Dorsolateral prefrontal cortex (tissue), 120 donors: ENCODE measurements at regions of chr2 and their contacts with region 1.

Region 1: DNA sequence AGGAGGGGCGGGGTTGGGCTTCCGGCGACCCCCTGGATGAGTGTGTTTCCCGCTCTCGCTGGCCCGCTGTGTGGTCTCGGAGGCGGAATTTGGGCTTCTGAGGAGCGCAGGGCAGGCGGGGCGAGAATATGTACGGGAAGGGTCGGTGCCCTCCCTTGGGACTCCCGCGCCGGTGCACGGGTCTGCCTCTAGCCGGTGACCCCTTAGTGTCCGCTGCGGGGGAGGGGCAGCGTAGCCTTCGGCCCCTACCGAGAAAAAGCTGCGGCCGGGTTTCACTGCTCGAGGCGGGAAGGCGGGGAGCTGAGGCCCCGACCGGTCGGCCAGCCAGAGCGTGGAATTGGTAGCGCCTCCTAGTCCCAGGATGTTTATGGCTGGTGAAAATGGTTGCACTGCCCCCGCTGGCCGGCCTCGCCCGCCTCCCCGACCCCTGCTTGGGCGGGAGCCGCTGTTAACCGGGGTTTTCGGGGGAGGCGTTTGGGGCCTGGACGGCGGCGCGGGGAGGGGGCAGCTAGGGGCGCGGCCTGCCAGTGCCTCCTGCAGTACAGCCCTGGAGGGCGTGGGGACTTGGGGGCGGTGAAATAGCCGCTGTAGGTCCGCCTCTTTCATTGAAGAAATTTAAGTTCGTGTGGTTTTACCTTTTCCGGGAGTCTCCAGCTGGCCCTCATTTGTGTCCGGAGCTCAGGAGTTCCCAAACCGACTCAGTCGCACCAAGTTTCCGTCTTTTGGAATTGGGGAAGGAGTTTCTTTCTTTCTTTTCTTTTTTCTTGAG is at the start of gene UGP2:
- DNase-seq: peak; percentile 54 to 85 (median 71)
- H3K4me3 ChIP-seq: peak within 1 kb of the TSS; percentile 73 to 99 (median 93)
- H3K27ac ChIP-seq: peak within 1 kb of the TSS; percentile 85 to 99 (median 97)
- H3K27me3 ChIP-seq: no peaks in the 10 kb centered on the region
- CTCF ChIP-seq: peak in 48 of 56 donors; percentile 2 to 66 (median 41)
- total RNA-seq, gene UGP2: 84.4 to 293 (median 212) TPM

Region 2: DNA sequence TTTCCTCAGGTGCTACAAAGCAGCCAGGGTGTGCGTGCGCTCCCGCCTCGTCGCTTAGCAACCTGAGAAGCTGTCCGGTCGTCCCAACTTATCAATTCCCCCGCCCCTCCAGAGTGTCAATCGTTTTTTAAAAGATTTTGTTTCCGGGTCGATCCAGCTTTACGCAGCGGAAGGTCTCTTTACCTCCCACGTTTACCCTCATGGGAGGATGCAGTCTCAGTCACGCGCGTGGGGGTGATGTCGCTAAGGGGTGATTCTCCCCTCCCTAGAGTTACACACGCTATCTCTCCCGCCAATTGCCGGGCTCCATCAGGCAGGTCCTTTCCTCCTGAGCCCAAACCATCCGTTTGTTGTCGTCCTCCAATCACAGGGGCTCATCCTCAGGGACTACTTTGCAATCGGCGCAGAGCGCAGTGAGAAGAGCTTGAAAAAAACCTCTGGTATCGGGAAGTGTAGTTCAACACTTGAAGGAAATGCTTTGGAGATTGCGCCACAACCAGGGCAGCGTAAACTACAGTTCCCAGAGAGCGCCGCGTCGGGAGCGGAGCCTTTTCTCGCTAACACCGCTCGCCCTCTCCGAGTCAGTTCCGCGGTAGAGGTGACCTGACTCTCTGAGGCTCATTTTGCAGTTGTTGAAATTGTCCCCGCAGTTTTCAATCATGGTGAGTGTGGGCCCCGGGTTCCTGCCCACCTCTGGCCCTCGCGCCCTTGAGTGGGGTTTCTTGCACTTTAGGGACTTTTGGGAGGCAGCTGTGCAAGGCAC is 252.9 kb before region 1 on chr2 and contains the starts of genes MDH1 and WDPCP:
- intact Hi-C with region 1: loop called (anchors 5 to 10 kb)
- DNase-seq: peak; percentile 85 to 98 (median 94)
- H3K4me3 ChIP-seq: peak within 1 kb of the TSS; percentile 63 to 99 (median 92)
- H3K27ac ChIP-seq: peak within 1 kb of the TSS; percentile 72 to 97 (median 92)
- H3K27me3 ChIP-seq: no peaks in the 10 kb centered on the region
- CTCF ChIP-seq: peak in 29 of 56 donors; percentile 1 to 58 (median 18)
- total RNA-seq, gene MDH1: 170 to 794 (median 563) TPM
- total RNA-seq, gene WDPCP: 22.1 to 56.7 (median 36.8) TPM

Region 3: DNA sequence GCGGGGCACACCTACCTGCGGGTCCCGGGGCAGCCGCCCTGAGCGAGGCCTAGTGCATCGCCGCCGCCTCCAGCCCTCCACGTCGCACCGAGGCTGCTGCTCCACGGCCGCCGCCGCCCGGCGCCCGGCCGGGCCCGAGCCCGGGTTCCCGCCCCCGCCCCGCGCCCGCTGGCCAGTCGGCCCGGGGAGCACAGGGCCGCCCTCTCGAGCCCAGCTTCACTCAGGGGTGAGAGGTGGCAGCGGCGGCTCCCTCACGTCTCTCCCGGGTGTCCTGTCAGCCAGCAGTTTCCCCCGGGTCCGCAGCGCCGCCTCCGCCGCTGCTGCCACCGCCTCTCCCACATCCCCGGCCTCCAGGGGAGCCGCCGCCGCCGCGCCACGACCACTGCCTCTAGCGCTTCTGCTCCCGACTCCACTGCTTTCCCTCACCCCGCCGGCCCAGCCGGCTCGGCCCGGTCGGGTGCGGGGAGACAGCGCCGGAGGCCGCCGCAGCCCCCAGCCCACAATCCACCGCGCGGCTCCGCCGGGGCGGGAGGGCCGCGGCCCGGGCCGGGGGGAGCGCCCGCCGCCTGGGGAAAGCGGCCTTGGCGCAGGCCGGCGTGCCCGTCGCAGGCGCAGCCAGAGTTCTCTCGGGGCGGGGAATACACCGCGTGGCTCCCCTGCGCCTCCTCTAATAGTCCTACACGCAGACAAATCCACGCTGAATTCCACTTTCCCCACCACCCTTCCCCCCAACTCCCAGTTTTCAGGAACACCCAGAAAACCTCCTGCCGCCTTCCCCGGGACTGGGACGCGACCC is 177.7 kb after region 1 on chr2 and contains the start of gene VPS54:
- intact Hi-C with region 1: loop called in 1 of 2 experiments (anchors 2 kb)
- DNase-seq: peak; percentile 43 to 85 (median 60)
- H3K4me3 ChIP-seq: peak within 1 kb of the TSS; percentile 38 to 88 (median 73)
- H3K27ac ChIP-seq: peak within 1 kb of the TSS; percentile 53 to 99 (median 93)
- H3K27me3 ChIP-seq: no peaks in the 10 kb centered on the region
- CTCF ChIP-seq: peak in 11 of 56 donors; percentile 1 to 47 (median 13)
- total RNA-seq, gene VPS54: 11.8 to 23.3 (median 17.3) TPM